Activated naive CD4-positive, alpha-beta T cell treated with anti-CD3 and anti-CD28 coated beads for 36 hours (primary cell): ENCODE measurements at regions of chr2 and their contacts with region 1.

Region 1: GRCh38 chr2:196926562-196927375 is at the start of gene PGAP1:
- DNase-seq: peak; percentile 85
- H3K4me3 Mint-ChIP-seq: peak within 1 kb of the TSS; percentile 93
- H3K27ac Mint-ChIP-seq: peak within 1 kb of the TSS; percentile 98
- H3K4me1 Mint-ChIP-seq: peaks cover 31% of the 10 kb centered on the region
- H3K27me3 Mint-ChIP-seq: no peaks in the 10 kb centered on the region
- total RNA-seq, gene PGAP1: 29.3 to 33.3 TPM

Region 2: GRCh38 chr2:196239622-196240587 is 686.9 kb before region 1 on chr2:
- CTCF ChIA-PET with region 1: no interaction called
- intact Hi-C with region 1: loop called (anchors 1 kb)
- DNase-seq: peak; percentile 93
- H3K4me3 Mint-ChIP-seq: peak overlapping the region; percentile 49
- H3K27ac Mint-ChIP-seq: peak overlapping the region; percentile 88
- H3K4me1 Mint-ChIP-seq: peaks cover 85% of the 10 kb centered on the region
- H3K27me3 Mint-ChIP-seq: no peaks in the 10 kb centered on the region

Region 3: DNA sequence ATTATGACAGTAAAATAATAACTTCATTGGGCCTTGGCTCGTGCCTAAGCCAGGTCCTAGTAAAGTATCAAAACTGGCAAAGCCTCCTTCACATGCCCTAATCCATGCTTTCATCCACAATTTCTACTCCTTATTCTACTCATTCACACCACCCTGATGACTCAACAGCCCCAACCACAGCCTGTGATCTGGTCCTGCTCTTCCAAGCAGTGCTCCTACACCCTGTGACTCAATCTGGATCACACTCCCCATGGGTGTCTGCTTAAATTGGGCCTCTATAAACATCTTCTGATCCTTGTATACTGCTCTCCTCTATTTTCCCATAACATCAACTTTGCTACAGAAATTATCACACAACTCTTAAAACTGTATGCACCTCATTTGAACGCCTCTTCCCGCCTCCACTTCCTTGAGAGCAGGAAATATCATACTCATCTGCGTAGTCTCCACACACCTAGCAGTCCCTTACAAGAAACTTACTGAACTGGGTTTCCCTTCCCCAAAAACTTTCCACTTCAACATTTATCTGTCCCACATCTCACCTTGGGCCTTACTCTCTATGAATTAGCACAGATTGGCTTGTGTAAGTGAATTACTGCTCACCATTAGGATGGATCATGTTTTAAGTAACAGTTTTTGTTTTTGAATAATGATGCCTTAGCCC is 143.2 kb before region 1 on chr2:
- CTCF ChIA-PET with region 1: no interaction called
- intact Hi-C with region 1: loop called (anchors 1 kb)
- DNase-seq: peak; percentile 74
- H3K4me3 Mint-ChIP-seq: no peak overlapping the region
- H3K27ac Mint-ChIP-seq: peak overlapping the region; percentile 79
- H3K4me1 Mint-ChIP-seq: peaks cover 17% of the 10 kb centered on the region
- H3K27me3 Mint-ChIP-seq: no peaks in the 10 kb centered on the region

Region 4: DNA sequence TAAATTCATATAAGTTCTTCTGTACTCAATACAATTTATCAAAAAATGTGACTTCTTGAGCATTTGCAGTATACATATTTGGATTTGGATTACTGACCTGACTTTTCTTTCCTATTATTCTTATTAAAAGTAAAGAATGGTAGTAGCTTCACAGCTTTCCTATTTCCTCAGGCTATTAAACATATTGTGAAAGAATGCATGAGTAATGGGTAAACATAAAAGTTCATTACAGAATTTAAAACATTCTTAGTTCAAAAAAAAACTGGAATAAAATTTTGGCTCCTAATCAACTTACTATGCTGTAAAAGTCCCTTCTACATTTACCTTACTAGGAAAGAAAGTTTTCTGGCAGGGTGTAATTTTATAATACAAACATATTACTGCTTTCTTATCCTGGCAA is 90.3 kb before region 1 on chr2:
- CTCF ChIA-PET with region 1: no interaction called
- intact Hi-C with region 1: no loop called
- DNase-seq: no peak
- H3K4me3 Mint-ChIP-seq: no peak overlapping the region
- H3K27ac Mint-ChIP-seq: no peak overlapping the region
- H3K4me1 Mint-ChIP-seq: peaks cover 2% of the 10 kb centered on the region
- H3K27me3 Mint-ChIP-seq: no peaks in the 10 kb centered on the region

Region 5: DNA sequence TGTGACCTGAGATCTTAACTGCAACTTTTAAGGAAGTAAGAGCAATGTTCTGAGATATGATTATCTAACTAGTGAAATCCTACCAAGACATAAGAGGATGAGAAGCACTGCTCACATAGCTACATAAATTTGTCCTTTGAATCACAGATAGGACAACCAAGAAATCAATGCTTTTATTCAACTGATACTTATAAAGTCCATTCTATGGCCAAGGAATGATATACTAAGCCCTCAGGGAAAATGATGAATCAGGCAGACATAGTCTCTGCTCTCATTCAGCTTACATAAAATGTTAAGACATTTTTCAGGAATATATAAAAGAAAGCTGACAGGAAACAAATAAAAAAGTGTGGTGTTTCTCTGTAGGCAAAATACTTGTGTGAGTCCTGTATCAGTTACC is 39.3 kb before region 1 on chr2:
- CTCF ChIA-PET with region 1: no interaction called
- intact Hi-C with region 1: no loop called
- DNase-seq: no peak
- H3K4me3 Mint-ChIP-seq: no peak overlapping the region
- H3K27ac Mint-ChIP-seq: no peak overlapping the region
- H3K4me1 Mint-ChIP-seq: no peaks in the 10 kb centered on the region
- H3K27me3 Mint-ChIP-seq: no peaks in the 10 kb centered on the region

Region 6: DNA sequence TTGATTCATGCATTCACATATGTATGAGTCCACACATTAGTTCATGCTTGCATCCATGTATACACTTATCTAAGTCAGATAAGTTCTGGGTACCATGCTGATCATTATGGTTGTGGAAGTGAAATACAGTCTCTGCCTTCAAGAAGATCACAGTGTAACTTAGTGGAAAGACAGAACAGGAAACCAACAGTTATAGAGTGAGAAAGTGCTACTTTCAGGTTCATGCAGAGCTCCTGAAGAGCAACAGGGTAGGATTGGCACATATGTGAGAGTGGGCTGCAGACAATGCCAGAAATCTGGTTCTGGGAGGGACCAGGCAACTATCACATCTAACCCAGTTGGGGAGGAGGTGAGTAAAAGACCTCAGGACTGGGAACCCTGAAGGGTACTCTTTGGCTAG is 35.1 kb after region 1 on chr2:
- CTCF ChIA-PET with region 1: interaction called, 6 read pairs
- intact Hi-C with region 1: loop called (anchors 1 kb)
- DNase-seq: peak; percentile 38
- H3K4me3 Mint-ChIP-seq: no peak overlapping the region
- H3K27ac Mint-ChIP-seq: peak overlapping the region; percentile 32
- H3K4me1 Mint-ChIP-seq: peaks cover 27% of the 10 kb centered on the region
- H3K27me3 Mint-ChIP-seq: no peaks in the 10 kb centered on the region

Region 7: DNA sequence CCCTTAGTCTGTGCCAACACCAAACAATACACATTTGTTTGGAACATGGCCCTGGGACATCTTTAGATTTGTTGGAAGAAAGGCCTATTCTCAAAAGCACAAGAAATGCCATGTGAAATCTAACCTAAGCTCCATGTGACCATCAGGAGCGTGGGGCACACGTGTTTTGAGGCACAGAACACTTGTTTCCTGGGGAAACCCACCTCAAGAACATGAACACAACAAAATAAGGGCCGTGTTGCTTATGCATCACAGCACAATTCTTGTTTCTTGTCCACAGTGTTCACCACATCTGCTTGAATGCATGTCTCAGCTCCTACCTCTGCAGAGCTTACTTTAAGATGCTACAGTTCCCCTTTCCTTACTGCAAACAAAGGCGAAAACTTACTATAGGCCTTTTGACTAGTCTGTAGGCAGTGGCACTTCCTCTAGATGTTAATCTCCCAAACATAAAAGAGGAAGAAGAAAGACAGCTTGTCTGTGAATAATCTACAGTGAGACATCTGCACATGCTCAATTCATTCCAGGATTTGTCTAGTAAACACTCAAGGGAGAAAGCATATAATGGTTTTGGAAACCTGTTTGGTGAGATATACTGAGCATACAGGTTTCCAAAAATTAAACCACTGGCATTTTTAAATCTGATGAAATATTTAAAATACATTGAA is 218.8 kb after region 1 on chr2:
- CTCF ChIA-PET with region 1: no interaction called
- intact Hi-C with region 1: loop called (anchors 5 kb)
- DNase-seq: peak; percentile 16
- H3K4me3 Mint-ChIP-seq: no peak overlapping the region
- H3K27ac Mint-ChIP-seq: peak overlapping the region; percentile 85
- H3K4me1 Mint-ChIP-seq: peaks cover 70% of the 10 kb centered on the region
- H3K27me3 Mint-ChIP-seq: no peaks in the 10 kb centered on the region

Region 8: GRCh38 chr2:197310271-197310985 is 383.7 kb after region 1 on chr2 and contains the start of gene ANKRD44:
- CTCF ChIA-PET with region 1: interaction called, 3 read pairs
- intact Hi-C with region 1: loop called (anchors 2 kb)
- DNase-seq: peak; percentile 91
- H3K4me3 Mint-ChIP-seq: peak within 1 kb of the TSS; percentile 90
- H3K27ac Mint-ChIP-seq: peak within 1 kb of the TSS; percentile 96
- H3K4me1 Mint-ChIP-seq: peaks cover 58% of the 10 kb centered on the region
- H3K27me3 Mint-ChIP-seq: no peaks in the 10 kb centered on the region
- total RNA-seq, gene ANKRD44: 87.8 to 101 TPM

Region 9: GRCh38 chr2:197499594-197500526 is 573.1 kb after region 1 on chr2 and contains the starts of genes HSPD1 and HSPE1:
- CTCF ChIA-PET with region 1: no interaction called
- intact Hi-C with region 1: loop called (anchors 1 kb)
- DNase-seq: peak; percentile 99
- H3K4me3 Mint-ChIP-seq: peak within 1 kb of the TSS; percentile 92
- H3K27ac Mint-ChIP-seq: peak within 1 kb of the TSS; percentile 98
- H3K4me1 Mint-ChIP-seq: peaks cover 51% of the 10 kb centered on the region
- H3K27me3 Mint-ChIP-seq: no peaks in the 10 kb centered on the region
- total RNA-seq, gene HSPD1: 1,191 to 1,210 TPM
- total RNA-seq, gene HSPE1: 294 to 310 TPM